ENCODE measurements at regions of chr3 and their contacts with region 1.

Region 1: DNA sequence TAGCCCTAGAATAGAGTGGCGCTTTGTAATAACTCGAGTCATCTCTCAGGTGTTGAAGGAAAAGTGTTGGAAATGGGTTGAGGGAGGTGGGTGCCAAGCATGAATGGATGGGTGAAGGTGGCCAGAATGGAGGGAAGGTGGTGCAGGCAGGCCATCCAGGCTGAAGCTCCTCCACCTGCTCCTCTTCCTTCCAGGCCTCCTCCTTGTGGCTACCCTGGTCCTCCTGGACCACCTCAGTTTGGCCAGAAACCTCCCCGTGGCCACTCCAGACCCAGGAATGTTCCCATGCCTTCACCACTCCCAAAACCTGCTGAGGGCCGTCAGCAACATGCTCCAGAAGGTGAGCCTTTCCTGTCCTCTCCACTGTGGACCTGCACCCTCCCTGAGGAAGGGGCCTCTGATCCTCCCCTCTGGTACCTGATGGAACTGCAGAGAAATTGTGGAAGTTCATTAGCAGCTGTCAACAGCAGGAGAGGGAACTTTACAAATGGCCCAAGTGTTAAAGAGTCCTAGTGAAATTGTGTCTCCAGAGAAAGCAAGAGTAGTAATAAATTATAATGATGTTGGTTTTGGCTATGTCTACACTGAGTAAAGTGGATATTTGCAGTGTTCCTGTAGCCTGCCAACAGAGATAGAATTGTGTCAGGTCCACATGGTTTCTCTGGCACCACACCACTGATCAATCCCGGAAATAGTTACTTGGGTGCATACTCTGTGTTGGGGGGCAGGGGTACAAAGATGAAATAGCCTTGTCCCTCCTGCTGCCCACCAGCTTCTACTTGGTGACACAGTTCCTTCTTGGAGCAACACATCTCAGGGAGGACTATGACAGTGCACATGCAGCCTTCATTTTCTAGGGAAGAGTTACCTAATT is 1.6 kb downstream of the IL12A start:
- DNase-seq: no peak
- H3K4me3 ChIP-seq: no peak overlapping the region
- H3K27ac ChIP-seq: no peak overlapping the region
- H3K4me1 ChIP-seq: peaks cover 3% of the 10 kb centered on the region
- H3K27me3 ChIP-seq: no peaks in the 10 kb centered on the region
- CTCF ChIP-seq: no peak
- EP300 ChIP-seq: no peak
- POLR2A ChIP-seq: no peak

Region 2: GRCh38 chr3:159897331-159898075 is 92.7 kb before region 1 on chr3:
- intact Hi-C with region 1: loop called in 1 of 4 experiments (anchors 10 kb)
- DNase-seq: peak in 2 of 5 donors; percentile 21 to 39
- H3K4me3 ChIP-seq: no peak overlapping the region
- H3K27ac ChIP-seq: peak overlapping the region in 1 of 2 donors; percentile 61
- H3K4me1 ChIP-seq: peaks cover 6% of the 10 kb centered on the region
- H3K27me3 ChIP-seq: no peaks in the 10 kb centered on the region
- CTCF ChIP-seq: no peak
- EP300 ChIP-seq: no peak
- POLR2A ChIP-seq: no peak

Measured in ovary (tissue), 10 donors.